Activated CD4-positive, alpha-beta T cell treated with anti-CD3 and anti-CD28 coated beads, Interleukin-2, amount 10 ng/mL, durations not matched to agents 7 days and 5 days (primary cell): ENCODE measurements at regions of chr1 and their contacts with region 1.

Region 1: DNA sequence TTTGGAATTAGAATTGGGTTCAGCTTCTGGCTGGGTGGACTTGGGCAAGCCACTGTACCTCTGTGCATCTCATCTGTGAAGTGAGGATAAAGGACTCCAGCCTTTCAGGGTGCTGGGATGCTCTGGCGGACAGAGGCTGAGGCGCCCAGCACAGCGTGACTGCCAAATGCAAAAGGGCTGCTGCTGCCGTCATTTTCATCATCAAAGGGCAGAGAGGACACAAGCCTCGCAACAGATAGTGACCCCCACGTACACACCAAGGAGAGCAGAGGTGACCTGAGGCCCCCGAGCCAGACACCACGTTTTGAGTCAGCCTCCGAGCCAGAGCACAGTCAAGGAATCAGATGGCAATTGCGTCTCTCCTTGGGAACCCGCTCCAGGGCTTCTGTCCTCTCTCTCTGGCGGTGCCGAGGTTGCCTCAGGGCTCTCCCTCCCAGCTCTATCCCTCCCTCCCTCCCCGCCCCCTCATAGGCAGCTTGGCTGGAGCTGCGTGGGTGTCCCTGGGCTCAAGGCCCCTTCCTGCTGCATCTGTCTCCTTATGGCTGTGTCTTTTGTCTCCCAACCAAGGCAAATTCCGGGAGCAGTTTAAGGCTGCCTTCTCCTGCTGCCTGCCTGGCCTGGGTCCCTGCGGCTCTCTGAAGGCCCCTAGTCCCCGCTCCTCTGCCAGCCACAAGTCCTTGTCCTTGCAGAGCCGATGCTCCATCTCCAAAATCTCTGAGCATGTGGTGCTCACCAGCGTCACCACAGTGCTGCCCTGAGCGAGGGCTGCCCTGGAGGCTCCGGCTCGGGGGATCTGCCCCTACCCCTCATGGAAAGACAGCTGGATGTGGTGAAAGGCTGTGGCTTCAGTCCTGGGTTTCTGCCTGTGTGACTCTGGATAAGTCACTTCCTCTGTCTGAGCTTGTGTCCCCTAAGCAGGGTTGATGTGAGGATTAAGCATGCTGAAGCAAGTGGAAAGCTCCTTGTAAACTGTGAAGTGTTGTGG is 9.0 kb downstream of the HCRTR1 start:
- DNase-seq: no peak
- H3K4me3 Mint-ChIP-seq: no peak overlapping the region
- H3K27ac Mint-ChIP-seq: no peak overlapping the region
- H3K4me1 Mint-ChIP-seq: peaks cover 10% of the 10 kb centered on the region
- H3K27me3 Mint-ChIP-seq: no peaks in the 10 kb centered on the region

Region 2: GRCh38 chr1:31576201-31576669 is 50.3 kb before region 1 on chr1 and contains the start of gene TINAGL1:
- CTCF ChIA-PET with region 1: no interaction called
- POLR2A ChIA-PET with region 1: no interaction called
- DNase-seq: peak; percentile 8
- H3K4me3 Mint-ChIP-seq: no peak within 1 kb of the TSS
- H3K27ac Mint-ChIP-seq: no peak within 1 kb of the TSS
- H3K4me1 Mint-ChIP-seq: peaks cover 3% of the 10 kb centered on the region
- H3K27me3 Mint-ChIP-seq: peaks cover under 1% of the 10 kb centered on the region
- total RNA-seq, gene TINAGL1: not detected

Region 3: GRCh38 chr1:31605908-31606427 is 20.5 kb before region 1 on chr1:
- CTCF ChIA-PET with region 1: no interaction called
- POLR2A ChIA-PET with region 1: no interaction called
- DNase-seq: no peak
- H3K4me3 Mint-ChIP-seq: no peak overlapping the region
- H3K27ac Mint-ChIP-seq: no peak overlapping the region
- H3K4me1 Mint-ChIP-seq: peaks cover 2% of the 10 kb centered on the region
- H3K27me3 Mint-ChIP-seq: peaks cover 18% of the 10 kb centered on the region

Region 4: GRCh38 chr1:31639543-31639942 is 13.0 kb after region 1 on chr1:
- CTCF ChIA-PET with region 1: interaction called, 12 read pairs
- POLR2A ChIA-PET with region 1: interaction called, 7 read pairs
- DNase-seq: no peak
- H3K4me3 Mint-ChIP-seq: no peak overlapping the region
- H3K27ac Mint-ChIP-seq: no peak overlapping the region
- H3K4me1 Mint-ChIP-seq: peaks cover 26% of the 10 kb centered on the region
- H3K27me3 Mint-ChIP-seq: no peaks in the 10 kb centered on the region